ENCODE measurements at regions of chr1 and their contacts with region 1.

Region 1: GRCh38 chr1:109532365-109533136 is 7.1 kb upstream of the GPR61 start:
- DNase-seq: peak; percentile 98
- H3K4me3 Mint-ChIP-seq: peak overlapping the region; percentile 74
- H3K27ac Mint-ChIP-seq: peak overlapping the region; percentile 86
- H3K4me1 Mint-ChIP-seq: peaks cover 23% of the 10 kb centered on the region
- H3K27me3 Mint-ChIP-seq: no peaks in the 10 kb centered on the region

Region 2: DNA sequence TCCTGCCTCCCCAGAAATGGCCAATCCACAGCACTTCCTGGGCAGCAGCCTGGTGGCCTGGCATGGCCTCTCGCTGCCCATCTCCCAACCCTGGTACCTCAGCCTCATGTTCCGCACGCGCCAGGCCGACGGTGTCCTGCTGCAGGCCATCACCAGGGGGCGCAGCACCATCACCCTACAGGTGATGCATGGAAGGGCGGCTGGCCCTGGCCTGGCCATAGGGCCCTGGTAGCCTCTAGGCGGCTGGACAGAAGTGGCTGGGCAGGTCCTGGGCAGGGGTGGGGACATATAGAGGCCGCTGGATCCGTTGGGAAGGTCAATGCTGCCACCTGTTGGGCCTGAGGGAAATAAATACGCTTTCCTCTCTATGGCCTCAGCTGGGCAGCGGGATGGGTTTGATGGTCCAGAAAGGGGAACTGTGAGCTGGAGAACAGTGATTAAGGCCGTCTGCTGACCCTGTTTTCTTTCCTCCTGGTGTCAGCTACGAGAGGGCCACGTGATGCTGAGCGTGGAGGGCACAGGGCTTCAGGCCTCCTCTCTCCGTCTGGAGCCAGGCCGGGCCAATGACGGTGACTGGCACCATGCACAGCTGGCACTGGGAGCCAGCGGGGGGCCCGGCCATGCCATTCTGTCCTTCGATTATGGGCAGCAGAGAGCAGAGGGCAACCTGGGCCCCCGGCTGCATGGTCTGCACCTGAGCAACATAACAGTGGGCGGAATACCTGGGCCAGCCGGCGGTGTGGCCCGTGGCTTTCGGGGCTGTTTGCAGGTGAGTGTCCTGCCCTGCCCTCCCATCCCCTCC is 268.8 kb before region 1 on chr1:
- intact Hi-C with region 1: loop called (anchors 1 kb)
- DNase-seq: peak; percentile 95
- H3K4me3 Mint-ChIP-seq: no peak overlapping the region
- H3K27ac Mint-ChIP-seq: peak overlapping the region; percentile 79
- H3K4me1 Mint-ChIP-seq: no peaks in the 10 kb centered on the region
- H3K27me3 Mint-ChIP-seq: no peaks in the 10 kb centered on the region

Region 3: GRCh38 chr1:109282952-109283747 is 249.4 kb before region 1 on chr1 and contains the start of gene PSRC1:
- intact Hi-C with region 1: loop called (anchors 2 kb)
- DNase-seq: peak; percentile 98
- H3K4me3 Mint-ChIP-seq: peak within 1 kb of the TSS; percentile 95
- H3K27ac Mint-ChIP-seq: peak within 1 kb of the TSS; percentile 95
- H3K4me1 Mint-ChIP-seq: peaks cover 19% of the 10 kb centered on the region
- H3K27me3 Mint-ChIP-seq: peaks cover 2% of the 10 kb centered on the region
- total RNA-seq, gene PSRC1: 4.5 and 5.0 TPM in 2 replicates

Region 4: DNA sequence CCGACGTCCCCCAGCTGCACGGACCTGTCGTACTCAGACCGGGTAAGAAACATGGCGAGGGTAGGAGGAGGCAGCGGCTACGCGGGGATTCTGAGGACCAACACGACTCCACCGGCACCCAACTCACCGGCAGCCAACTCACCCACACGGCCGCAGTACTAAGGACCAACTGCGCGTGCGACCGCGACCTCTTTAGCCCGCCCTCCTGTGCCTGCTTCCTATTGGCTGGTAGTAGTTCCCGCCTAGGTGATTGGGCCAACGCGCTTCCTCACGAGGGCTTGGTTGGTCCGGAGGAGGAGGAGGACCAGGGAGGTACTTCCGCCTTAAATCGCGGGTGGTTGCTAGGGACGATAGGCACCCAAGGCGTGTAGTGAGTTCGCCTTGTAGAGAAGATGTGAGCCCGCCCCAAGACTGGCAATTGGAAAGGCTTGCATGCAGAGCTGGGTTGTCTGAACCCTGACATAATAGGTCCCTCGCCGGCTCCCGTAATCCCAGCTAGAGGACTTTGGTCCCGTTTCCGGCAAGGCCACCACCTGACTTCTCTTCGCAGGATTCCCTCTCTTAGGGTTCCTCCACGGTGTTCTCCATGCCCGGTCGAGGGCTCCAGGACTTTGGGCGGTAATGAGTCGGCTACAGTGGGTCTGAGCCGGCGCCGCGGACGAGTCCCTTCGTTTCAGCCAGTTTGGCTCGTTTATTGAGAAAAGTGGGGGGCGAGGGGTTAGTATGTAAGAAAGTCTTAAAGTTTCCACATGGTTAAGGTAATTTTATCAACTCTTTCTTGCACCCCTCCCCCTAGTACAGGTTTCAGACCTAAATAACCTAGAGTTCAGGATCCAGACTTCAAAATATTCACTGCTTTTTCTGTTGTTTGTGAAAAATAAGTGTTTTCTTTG is 106.0 kb before region 1 on chr1 and contains the start of gene PSMA5:
- intact Hi-C with region 1: loop called (anchors 1 kb)
- DNase-seq: peak; percentile 98
- H3K4me3 Mint-ChIP-seq: peak within 1 kb of the TSS; percentile 94
- H3K27ac Mint-ChIP-seq: peak within 1 kb of the TSS; percentile 97
- H3K4me1 Mint-ChIP-seq: peaks cover 27% of the 10 kb centered on the region
- H3K27me3 Mint-ChIP-seq: peaks cover 2% of the 10 kb centered on the region
- total RNA-seq, gene PSMA5: 262 and 270 TPM in 2 replicates

Region 5: GRCh38 chr1:109454497-109455133 is 77.9 kb before region 1 on chr1:
- intact Hi-C with region 1: no loop called
- DNase-seq: no peak
- H3K4me3 Mint-ChIP-seq: no peak overlapping the region
- H3K27ac Mint-ChIP-seq: no peak overlapping the region
- H3K4me1 Mint-ChIP-seq: no peaks in the 10 kb centered on the region
- H3K27me3 Mint-ChIP-seq: peaks cover 48% of the 10 kb centered on the region

Region 6: GRCh38 chr1:109499661-109500536 is 32.7 kb before region 1 on chr1:
- intact Hi-C with region 1: loop called (anchors 1 kb)
- DNase-seq: peak; percentile 87
- H3K4me3 Mint-ChIP-seq: no peak overlapping the region
- H3K27ac Mint-ChIP-seq: no peak overlapping the region
- H3K4me1 Mint-ChIP-seq: peaks cover 77% of the 10 kb centered on the region
- H3K27me3 Mint-ChIP-seq: no peaks in the 10 kb centered on the region